KBM-7 (cell line): ENCODE measurements at regions of chr16 and their contacts with region 1.

Region 1: DNA sequence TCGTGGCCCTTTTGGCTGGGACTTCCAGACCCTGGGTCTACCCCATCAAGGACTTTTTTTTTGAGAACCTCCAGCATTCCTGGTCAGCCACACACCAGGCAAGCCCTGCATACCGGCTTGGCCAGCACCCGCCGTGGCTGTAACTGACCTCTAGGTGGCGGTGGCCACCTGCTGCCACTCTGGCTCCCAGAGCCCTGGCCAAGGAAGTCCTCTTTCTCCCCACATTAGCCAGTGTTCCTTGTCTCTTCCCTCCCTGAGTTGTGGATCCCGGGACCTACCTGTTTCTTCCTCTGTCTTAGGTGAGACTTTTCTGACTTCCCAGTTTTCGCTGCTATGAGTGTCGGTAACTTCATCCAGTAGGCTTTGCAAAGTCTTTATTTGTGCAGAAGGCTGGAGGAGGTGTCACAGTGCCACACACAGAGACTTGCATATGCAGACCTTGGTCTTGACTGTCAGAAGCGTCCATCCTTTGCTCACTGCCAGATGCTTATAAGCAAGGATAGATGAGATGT is 348.3 kb downstream of the CPPED1 start:
- DNase-seq: peak; percentile 65

Region 2: GRCh38 chr16:12558641-12559040 is 103.3 kb after region 1 on chr16:
- in situ Hi-C with region 1: no loop called
- DNase-seq: no peak

Region 3: DNA sequence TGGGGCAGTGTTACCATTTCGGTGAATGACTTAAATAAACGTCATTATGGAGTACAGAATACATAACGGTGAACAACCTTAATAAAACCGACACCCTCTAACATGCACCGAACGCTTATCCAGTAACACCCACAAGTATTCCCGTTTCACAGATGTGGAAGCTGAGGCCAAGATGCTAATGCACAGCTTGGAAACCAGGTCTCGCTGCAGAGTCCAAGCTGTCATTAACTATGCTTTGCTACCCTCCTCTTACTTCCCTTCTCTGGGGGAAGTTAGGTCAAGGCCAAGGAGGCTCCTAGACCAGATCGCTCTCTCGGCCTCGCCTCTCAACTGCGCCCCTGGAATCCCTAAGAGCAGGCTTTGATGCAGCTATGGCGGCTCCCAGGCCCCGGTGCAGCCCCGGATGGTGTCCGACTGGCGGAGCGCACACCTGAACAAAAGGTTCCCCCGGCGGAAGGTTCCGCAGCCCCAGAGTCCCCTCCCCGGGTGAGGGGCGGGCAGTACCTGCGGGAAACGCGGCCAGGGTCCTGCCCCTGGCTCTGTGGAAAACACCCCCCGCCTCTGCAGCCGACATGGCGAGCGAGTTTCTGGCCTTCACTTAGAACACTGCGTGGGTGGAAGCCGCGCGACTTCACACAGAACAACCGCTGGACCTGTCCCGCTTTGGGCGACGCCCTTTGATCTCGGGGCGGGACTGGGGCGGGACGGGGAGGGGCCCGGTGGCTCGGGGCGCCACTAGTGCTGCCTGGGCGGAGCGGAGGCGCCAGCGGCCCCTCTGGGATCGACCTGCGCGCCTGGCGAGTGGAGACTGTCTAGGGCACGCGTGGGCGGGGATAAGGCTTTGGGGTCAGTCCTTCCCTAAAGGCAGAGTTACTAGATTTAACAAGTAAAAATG is 348.1 kb after region 1 on chr16 and contains the start of gene CPPED1:
- in situ Hi-C with region 1: loop called (anchors 25 kb)
- DNase-seq: peak; percentile 92